ENCODE measurements at regions of chr11 and their contacts with region 1.

Region 1: DNA sequence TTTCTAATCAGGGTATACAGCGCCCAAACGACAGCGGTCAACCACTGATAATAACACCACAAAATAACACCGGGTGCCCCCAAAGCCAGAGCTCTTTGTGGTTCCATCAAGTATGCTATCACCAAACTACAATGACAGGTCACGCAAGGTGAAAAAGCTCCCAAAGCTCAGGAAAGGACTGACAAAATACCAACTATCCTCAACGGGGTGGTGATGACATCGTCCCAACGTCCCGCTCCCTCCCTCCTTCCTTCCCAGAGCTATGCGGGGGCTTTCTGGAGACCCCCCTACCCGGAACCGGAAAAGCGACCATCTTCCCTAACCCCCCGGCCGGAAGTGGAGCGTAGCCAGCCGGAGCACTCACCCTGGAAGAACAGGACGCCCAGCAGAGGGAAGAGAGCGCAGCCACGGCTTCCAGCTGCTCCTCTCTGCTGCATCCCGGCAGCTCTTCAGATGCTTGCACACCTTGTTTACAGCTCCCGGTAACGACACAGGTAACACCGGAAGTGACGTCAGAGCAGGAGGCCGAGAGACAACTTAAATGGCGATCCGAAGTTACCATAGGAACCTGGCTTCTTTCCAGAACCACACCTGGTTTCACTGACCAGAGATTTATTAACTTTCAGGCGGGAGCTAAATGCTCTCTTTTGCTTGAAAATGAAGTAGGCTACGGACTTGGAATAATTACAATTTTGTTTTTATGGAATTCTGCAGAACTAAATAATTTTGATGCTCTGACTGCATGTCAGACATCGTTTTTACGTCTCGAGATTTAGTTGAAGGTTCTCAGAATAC is at the start of gene MPZL3:
- DNase-seq: peak; percentile 92
- ATAC-seq: peak; percentile 72
- H3K4me3 Mint-ChIP-seq: peak within 1 kb of the TSS; percentile 93
- H3K27ac Mint-ChIP-seq: peak within 1 kb of the TSS; percentile 99
- H3K4me1 Mint-ChIP-seq: peaks cover 49% of the 10 kb centered on the region
- H3K27me3 Mint-ChIP-seq: no peaks in the 10 kb centered on the region
- CTCF ChIP-seq: no peak
- total RNA-seq, gene MPZL3: 51.1 to 51.7 TPM

Region 2: DNA sequence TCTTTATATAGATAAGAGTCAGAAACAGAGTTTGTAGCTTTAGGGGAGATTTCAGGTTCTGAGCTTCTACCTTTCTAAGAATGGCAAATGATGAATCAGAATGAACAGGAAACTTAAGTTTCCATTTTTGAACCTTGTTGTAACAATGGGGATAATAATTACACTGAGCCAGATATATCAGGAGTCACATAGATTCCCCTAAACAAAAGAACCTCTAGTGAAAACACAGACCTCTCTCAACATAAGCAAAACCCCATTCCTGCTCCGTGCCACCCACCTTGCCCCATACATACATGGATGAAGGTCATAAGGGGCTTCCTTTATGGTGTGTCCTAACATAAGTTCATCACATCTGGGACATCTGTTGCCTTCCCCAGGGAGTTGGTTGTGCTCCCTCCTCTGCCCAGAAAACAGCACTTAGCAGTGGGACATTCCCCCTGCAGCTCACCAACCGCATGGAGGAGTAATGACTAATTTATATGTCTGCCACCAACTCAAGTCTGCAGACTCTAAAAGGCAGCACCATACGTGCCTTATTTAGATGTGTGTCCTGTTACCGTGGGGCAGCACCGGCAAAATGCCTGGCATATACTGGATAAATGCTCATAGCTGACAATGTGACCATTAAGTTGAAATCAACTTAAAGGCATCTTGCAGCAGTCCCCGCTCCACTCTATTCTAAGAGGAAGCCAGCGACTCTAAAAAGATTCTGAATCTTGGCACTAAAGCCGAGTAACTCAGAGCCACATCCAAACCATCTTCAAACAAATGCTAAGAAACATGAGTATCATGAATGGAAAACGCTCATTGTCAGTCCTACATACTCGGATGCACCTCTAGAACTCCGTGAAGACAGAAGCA is 35.2 kb before region 1 on chr11:
- CTCF ChIA-PET with region 1: interaction called, 5 read pairs
- POLR2A ChIA-PET with region 1: interaction called, 364 read pairs
- intact Hi-C with region 1: loop called (anchors 5 kb)
- DNase-seq: peak; percentile 79
- ATAC-seq: peak; percentile 70
- H3K4me3 Mint-ChIP-seq: peak overlapping the region; percentile 96
- H3K27ac Mint-ChIP-seq: peak overlapping the region; percentile 100
- H3K4me1 Mint-ChIP-seq: peaks cover 84% of the 10 kb centered on the region
- H3K27me3 Mint-ChIP-seq: no peaks in the 10 kb centered on the region
- CTCF ChIP-seq: no peak

Region 3: GRCh38 chr11:118227865-118228785 is 23.9 kb before region 1 on chr11:
- CTCF ChIA-PET with region 1: interaction called, 7 read pairs
- POLR2A ChIA-PET with region 1: interaction called, 364 read pairs
- intact Hi-C with region 1: no loop called
- DNase-seq: peak; percentile 60
- ATAC-seq: peak; percentile 2
- H3K4me3 Mint-ChIP-seq: peak overlapping the region; percentile 52
- H3K27ac Mint-ChIP-seq: no peak overlapping the region
- H3K4me1 Mint-ChIP-seq: peaks cover 39% of the 10 kb centered on the region
- H3K27me3 Mint-ChIP-seq: no peaks in the 10 kb centered on the region
- CTCF ChIP-seq: no peak

Region 4: GRCh38 chr11:118240999-118241768 is 10.9 kb before region 1 on chr11:
- CTCF ChIA-PET with region 1: interaction called, 6 read pairs
- POLR2A ChIA-PET with region 1: interaction called, 39 read pairs
- intact Hi-C with region 1: no loop called
- DNase-seq: peak; percentile 85
- ATAC-seq: peak; percentile 82
- H3K4me3 Mint-ChIP-seq: peak overlapping the region; percentile 86
- H3K27ac Mint-ChIP-seq: peak overlapping the region; percentile 97
- H3K4me1 Mint-ChIP-seq: peaks cover 78% of the 10 kb centered on the region
- H3K27me3 Mint-ChIP-seq: no peaks in the 10 kb centered on the region
- CTCF ChIP-seq: no peak

Region 5: DNA sequence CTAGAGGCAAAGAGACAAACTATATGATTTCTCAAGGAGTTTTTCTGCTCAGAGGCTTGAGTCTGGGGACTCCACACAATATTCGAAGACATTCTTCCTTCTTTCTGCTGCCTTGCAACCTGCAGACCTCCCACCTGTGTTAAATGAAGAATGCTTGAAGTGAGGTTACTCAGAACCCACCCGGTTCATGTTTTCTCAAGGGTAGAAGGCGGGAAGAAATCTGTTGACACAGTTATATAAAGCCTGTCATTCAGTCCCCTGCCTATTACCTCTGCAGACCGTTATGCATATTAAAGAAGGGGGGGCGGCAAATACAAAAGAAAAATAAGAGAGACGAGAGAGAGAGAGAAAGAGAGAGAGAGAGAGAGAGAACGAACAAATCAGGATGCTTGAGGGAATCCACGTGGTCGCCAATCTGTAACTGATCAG is 182.1 kb after region 1 on chr11:
- CTCF ChIA-PET with region 1: no interaction called
- POLR2A ChIA-PET with region 1: no interaction called
- intact Hi-C with region 1: no loop called
- DNase-seq: no peak
- ATAC-seq: no peak
- H3K4me3 Mint-ChIP-seq: peak overlapping the region; percentile 87
- H3K27ac Mint-ChIP-seq: peak overlapping the region; percentile 93
- H3K4me1 Mint-ChIP-seq: peaks cover 11% of the 10 kb centered on the region
- H3K27me3 Mint-ChIP-seq: no peaks in the 10 kb centered on the region
- CTCF ChIP-seq: no peak